ENCODE measurements at regions of chr16 and their contacts with region 1.

Region 1: DNA sequence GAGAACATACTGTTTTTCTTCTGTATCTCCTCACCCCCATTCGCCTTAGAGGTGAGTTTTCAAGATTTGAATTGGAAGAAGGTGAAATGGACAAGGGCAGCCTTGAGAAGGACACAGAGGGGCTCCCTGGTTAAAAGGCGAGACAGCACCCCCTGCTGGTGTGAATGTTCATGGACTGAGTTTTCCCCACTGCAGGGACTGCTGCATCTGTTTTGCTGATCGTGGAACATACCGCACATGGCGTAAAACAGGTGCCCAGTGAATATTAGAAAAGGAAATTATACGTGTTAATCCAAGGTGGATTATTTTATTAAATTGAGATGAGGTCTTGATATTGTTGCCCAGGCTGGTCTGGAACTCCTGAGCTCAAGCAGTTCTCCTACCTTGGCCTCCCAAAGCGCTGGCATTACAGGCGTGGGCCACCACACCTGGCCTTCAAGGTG is 54.5 kb downstream of the NDE1 start:
- DNase-seq: peak; percentile 76
- CTCF ChIP-seq: peak; percentile 53

Region 2: GRCh38 chr16:15427648-15428239 is 276.8 kb before region 1 on chr16:
- in situ Hi-C with region 1: loop called (anchors 10 kb)
- DNase-seq: peak; percentile 64
- CTCF ChIP-seq: peak; percentile 24

Region 3: DNA sequence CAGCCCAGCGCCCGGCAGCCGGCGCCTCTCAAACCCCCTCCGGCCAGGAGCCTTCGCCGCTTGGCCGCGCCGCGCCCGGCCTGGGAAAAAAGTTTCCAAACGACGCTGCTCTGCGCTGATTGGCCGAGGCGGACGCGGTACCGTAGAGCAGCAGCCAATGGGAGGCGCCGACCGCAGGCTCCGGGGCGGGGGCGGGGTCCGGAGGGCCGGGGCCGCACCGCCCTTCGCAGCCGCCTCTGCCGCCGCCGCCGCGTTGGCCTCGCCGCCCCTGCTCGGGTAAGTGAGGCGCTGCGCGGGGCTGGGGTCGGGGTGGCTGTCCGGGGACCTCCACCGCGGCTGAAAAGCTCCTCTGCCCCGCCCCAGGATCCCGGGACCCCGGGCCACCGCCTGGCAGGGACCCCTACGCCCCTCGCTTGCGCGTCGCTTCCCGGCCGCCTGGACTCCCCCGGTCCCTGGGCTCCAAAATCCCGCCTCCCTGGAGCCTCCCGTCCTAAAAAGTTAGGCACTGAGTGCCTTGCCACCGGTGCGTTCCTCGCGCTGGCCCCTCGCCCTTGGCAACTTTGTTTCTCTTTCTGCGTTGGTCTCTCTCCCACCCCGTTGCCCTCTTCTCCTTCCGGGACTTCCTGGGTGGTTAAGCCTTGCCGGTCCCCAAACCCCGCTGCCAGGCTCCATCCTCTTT is 54.4 kb before region 1 on chr16 and contains the start of gene NDE1:
- in situ Hi-C with region 1: no loop called
- DNase-seq: peak; percentile 95
- CTCF ChIP-seq: no peak

Region 4: GRCh38 chr16:15777533-15778203 is 73.1 kb after region 1 on chr16:
- in situ Hi-C with region 1: no loop called
- DNase-seq: peak; percentile 61
- CTCF ChIP-seq: no peak

Measured in GM13976 (cell line).